ENCODE measurements at regions of chr11 and their contacts with region 1.

Region 1: GRCh38 chr11:8087185-8087584 is 6.2 kb downstream of the TUB start:
- DNase-seq: no peak
- H3K4me3 ChIP-seq: no peak overlapping the region
- H3K27ac ChIP-seq: no peak overlapping the region
- H3K4me1 ChIP-seq: peaks cover 58% of the 10 kb centered on the region
- H3K27me3 ChIP-seq: no peaks in the 10 kb centered on the region
- CTCF ChIP-seq: no peak
- POLR2A ChIP-seq: no peak

Region 2: DNA sequence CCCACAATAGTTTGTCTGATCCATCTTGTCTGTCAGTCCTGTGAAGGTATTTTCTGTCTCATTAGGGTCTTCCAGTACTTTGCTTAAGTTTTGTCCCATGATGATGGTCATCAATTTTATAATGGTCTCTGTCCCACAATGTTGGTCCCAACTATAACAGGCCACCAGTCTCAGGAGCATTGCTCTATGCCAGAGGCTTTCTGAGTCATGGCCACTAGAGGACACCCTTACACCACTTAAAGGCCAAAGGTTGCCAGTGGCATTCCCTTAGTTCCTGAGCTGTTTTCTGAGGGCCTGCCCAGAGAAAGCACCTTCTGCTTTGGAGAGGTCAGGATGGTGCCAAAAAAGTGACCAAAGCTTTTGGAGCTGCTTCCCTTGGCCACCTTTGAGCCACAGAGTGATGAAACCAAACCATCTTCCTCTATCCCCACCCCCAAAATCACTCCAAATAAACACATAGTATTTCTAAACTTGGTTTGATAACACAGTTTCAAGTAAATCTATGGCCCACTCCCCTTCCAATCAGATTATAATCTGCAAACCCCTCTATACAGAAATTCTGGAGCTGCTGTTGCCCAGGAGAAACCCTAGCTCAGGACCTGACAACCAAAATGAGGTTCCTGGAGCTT is 80.7 kb before region 1 on chr11:
- intact Hi-C with region 1: no loop called
- DNase-seq: peak in 1 of 2 donors; percentile 77
- H3K4me3 ChIP-seq: no peak overlapping the region
- H3K27ac ChIP-seq: no peak overlapping the region
- H3K4me1 ChIP-seq: no peaks in the 10 kb centered on the region
- H3K27me3 ChIP-seq: no peaks in the 10 kb centered on the region
- CTCF ChIP-seq: peak; percentile 13 to 67 (median 65)
- POLR2A ChIP-seq: no peak

Region 3: GRCh38 chr11:8018484-8019313 is 68.5 kb before region 1 on chr11:
- intact Hi-C with region 1: loop called (anchors 5 kb)
- DNase-seq: peak; percentile 82 to 87
- H3K4me3 ChIP-seq: peak overlapping the region; percentile 70 to 77
- H3K27ac ChIP-seq: peak overlapping the region; percentile 97
- H3K4me1 ChIP-seq: peaks cover 26% of the 10 kb centered on the region
- H3K27me3 ChIP-seq: no peaks in the 10 kb centered on the region
- CTCF ChIP-seq: no peak
- POLR2A ChIP-seq: no peak